ENCODE measurements at regions of chr17 and their contacts with region 1.

Region 1: GRCh38 chr17:70114405-70114804 is 39.4 kb downstream of the KCNJ16 start:
- DNase-seq: no peak
- ATAC-seq: no peak
- H3K4me3 ChIP-seq: no peak overlapping the region
- H3K27ac ChIP-seq: no peak overlapping the region
- H3K4me1 ChIP-seq: no peaks in the 10 kb centered on the region
- H3K27me3 ChIP-seq: no peaks in the 10 kb centered on the region
- CTCF ChIP-seq: no peak
- EP300 ChIP-seq: no peak
- POLR2A ChIP-seq: no peak
- RAD21 ChIP-seq: no peak

Region 2: DNA sequence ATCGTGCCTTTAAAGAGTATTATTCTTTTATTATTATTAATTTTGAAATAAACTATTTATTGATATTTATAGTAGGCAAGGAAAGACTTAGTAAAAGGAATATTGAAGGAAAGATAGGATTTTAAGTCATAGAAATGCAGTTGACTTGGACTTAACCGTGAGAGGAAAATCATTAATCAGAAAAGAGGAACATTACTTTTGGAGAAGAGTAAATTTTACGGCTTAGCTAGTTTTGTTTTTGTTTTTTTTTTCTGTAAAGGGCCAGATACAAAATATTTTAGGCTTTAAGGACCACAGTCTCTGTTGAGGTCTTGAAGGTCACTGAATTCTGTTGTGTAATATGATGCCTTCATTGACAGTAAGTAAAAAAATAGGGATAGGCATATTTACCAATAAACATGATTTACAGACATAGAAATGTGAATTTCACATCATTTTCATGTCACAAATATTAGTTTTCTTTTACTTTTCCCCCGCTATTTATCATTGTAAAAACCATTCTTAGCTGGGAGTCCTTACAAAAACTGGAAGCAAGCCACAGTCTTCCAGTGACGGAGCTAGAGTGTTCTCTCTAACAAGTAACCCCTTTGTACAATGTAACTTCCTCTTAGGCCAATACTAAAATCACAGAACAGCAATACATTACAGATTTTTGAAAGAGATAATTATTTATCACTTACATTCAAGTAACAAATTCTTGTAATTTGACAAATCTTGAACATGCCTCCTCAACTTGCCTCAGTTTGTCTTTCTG is 41.7 kb before region 1 on chr17:
- CTCF ChIA-PET with region 1: no interaction called
- POLR2A ChIA-PET with region 1: no interaction called
- in situ Hi-C with region 1: no loop called
- intact Hi-C with region 1: no loop called
- DNase-seq: no peak
- ATAC-seq: no peak
- H3K4me3 ChIP-seq: no peak overlapping the region
- H3K27ac ChIP-seq: no peak overlapping the region
- H3K4me1 ChIP-seq: no peaks in the 10 kb centered on the region; a peak in 1 of 5 replicates
- H3K27me3 ChIP-seq: no peaks in the 10 kb centered on the region
- CTCF ChIP-seq: no peak
- EP300 ChIP-seq: no peak
- POLR2A ChIP-seq: no peak
- RAD21 ChIP-seq: no peak

Region 3: GRCh38 chr17:70127216-70127873 is 12.9 kb after region 1 on chr17:
- CTCF ChIA-PET with region 1: no interaction called
- POLR2A ChIA-PET with region 1: interaction called, 11 read pairs
- in situ Hi-C with region 1: no loop called
- intact Hi-C with region 1: no loop called
- DNase-seq: no peak
- ATAC-seq: peak; percentile 29
- H3K4me3 ChIP-seq: peak overlapping the region; percentile 55
- H3K27ac ChIP-seq: peak overlapping the region; percentile 93
- H3K4me1 ChIP-seq: peaks cover 0 to 9% of the 10 kb centered on the region in 2 experiments; a peak in 2 of 5 replicates
- H3K27me3 ChIP-seq: no peaks in the 10 kb centered on the region
- CTCF ChIP-seq: no peak
- EP300 ChIP-seq: no peak
- POLR2A ChIP-seq: peak; percentile 19; the same call in 1 of the 2 replicates
- RAD21 ChIP-seq: no peak

Region 4: GRCh38 chr17:70208825-70209555 is 94.6 kb after region 1 on chr17:
- CTCF ChIA-PET with region 1: no interaction called
- POLR2A ChIA-PET with region 1: no interaction called
- in situ Hi-C with region 1: no loop called
- intact Hi-C with region 1: no loop called
- DNase-seq: no peak
- ATAC-seq: no peak
- H3K4me3 ChIP-seq: no peak overlapping the region
- H3K27ac ChIP-seq: no peak overlapping the region
- H3K4me1 ChIP-seq: no peaks in the 10 kb centered on the region
- H3K27me3 ChIP-seq: no peaks in the 10 kb centered on the region
- CTCF ChIP-seq: no peak
- EP300 ChIP-seq: no peak
- POLR2A ChIP-seq: no peak
- RAD21 ChIP-seq: no peak